WTC11 (cell line): ENCODE measurements at regions of chr16 and their contacts with region 1.

Region 1: DNA sequence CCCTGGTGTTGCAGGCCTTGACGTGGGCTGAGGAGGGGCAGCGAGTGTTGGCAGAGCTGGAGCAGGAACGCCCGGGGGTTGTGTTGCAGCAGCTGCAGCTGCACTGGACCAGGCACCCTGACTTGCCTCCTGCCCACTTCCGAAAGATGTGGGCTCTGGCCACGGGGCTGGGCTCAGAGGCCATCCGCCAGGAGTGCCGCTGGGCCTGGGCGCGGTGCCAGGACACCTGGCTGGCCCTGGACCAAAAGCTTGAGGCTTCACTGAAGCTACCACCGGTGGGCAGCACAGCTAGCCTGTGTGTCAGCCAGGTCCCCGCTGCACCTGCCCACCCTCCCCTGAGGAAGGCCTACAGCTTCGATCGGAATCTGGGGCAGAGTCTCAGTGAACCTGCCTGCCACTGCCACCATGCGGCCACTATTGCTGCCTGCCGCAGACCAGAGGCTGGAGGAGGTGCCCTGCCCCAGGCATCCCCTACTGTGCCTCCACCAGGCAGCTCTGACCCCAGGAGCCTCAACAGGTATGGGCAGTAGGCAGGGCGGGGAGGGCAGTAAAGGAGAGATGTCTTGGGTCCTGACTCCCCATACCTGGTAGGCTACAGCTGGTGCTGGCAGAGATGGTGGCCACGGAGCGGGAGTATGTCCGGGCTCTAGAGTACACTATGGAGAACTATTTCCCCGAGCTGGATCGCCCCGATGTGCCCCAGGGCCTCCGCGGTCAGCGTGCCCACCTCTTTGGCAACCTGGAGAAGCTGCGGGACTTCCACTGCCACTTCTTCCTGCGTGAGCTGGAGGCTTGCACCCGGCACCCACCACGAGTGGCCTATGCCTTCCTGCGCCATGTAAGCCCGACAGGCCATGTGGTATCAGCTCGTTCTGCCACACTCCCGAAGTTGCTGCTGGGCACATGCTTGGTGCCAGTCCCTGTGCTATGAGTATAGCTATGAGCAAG is 5.6 kb downstream of the PLEKHG4 start:
- DNase-seq: peak; percentile 84
- ATAC-seq: peak; percentile 94
- H3K4me3 Mint-ChIP-seq: no peak overlapping the region
- H3K27ac Mint-ChIP-seq: no peak overlapping the region
- H3K4me1 Mint-ChIP-seq: no peaks in the 10 kb centered on the region
- H3K27me3 Mint-ChIP-seq: peaks cover 9% of the 10 kb centered on the region
- CTCF ChIP-seq: peak; percentile 58

Region 2: DNA sequence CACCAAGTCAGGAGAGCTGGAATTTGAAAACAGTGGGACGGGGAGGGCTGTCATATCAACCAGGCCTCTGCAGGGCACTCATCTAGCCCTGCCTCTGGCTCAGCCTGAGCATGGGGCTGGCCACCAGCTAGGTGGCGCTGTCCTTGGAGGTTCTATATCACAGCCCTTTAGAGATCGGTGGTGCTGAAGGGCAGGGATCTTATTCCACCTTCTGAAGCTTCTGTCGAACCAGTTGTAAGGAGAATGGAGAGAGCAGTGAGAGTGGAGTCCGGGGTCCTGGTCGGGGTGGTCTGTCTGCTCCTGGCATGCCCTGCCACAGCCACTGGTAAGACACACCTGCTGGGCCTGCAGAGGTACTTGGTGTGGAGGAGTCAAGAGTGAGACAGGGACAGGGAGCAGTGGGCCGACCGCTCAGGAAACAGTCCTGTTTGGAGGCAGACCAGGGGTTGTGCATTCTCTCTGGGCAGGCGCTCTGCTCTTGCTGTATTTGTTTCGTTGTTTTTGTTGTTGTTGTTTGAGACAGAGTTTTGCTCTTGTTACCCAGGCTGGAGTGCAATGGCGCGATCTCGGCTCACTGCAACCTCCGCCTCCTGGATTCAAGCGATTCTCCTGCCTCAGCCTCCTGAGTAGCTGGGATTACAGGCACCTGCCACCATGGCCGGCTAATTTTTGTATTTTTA is 323.8 kb before region 1 on chr16 and contains the start of gene CES3:
- CTCF ChIA-PET with region 1: interaction called, 10 read pairs
- POLR2A ChIA-PET with region 1: no interaction called
- DNase-seq: peak; percentile 91
- ATAC-seq: peak; percentile 100
- H3K4me3 Mint-ChIP-seq: peak within 1 kb of the TSS; percentile 66
- H3K27ac Mint-ChIP-seq: peak within 1 kb of the TSS; percentile 56
- H3K4me1 Mint-ChIP-seq: peaks cover 9% of the 10 kb centered on the region
- H3K27me3 Mint-ChIP-seq: peaks cover 8% of the 10 kb centered on the region; the same call in 1 of the 2 replicates
- CTCF ChIP-seq: peak; percentile 72
- total RNA-seq, gene CES3: 3.3 to 6.0 TPM (median 5.7 TPM) in 3 replicates

Region 3: GRCh38 chr16:67236563-67237395 is 48.2 kb before region 1 on chr16:
- CTCF ChIA-PET with region 1: interaction called, 12 read pairs
- POLR2A ChIA-PET with region 1: no interaction called
- DNase-seq: peak; percentile 96
- ATAC-seq: peak; percentile 93
- H3K4me3 Mint-ChIP-seq: peak overlapping the region; percentile 43; the same call in 1 of the 2 replicates
- H3K27ac Mint-ChIP-seq: peak overlapping the region; percentile 80
- H3K4me1 Mint-ChIP-seq: peaks cover 17% of the 10 kb centered on the region
- H3K27me3 Mint-ChIP-seq: no peaks in the 10 kb centered on the region
- CTCF ChIP-seq: no peak

Region 4: DNA sequence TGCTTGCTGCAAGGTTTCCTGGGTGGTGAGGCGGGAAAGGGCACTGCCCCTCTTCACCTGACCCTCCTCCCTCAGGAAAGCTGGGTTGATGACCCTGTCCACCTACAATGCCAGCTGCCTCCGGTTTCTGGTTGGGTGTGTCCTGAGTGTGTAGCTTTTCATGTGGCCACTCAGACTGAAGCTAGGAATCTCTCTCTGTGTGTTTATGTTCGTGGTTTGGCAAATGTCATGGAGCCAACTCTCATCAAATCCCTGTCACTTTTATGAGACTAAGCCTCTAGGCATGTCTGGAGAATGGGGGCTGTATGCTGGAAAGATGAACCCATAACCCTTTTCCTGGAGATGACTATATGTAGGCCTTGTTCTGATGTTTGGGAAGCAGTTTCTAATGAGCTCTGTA is 11.4 kb after region 1 on chr16:
- CTCF ChIA-PET with region 1: interaction called, 51 read pairs
- POLR2A ChIA-PET with region 1: no interaction called
- DNase-seq: no peak
- ATAC-seq: no peak
- H3K4me3 Mint-ChIP-seq: no peak overlapping the region
- H3K27ac Mint-ChIP-seq: no peak overlapping the region
- H3K4me1 Mint-ChIP-seq: no peaks in the 10 kb centered on the region
- H3K27me3 Mint-ChIP-seq: peaks cover 42% of the 10 kb centered on the region
- CTCF ChIP-seq: no peak

Region 5: DNA sequence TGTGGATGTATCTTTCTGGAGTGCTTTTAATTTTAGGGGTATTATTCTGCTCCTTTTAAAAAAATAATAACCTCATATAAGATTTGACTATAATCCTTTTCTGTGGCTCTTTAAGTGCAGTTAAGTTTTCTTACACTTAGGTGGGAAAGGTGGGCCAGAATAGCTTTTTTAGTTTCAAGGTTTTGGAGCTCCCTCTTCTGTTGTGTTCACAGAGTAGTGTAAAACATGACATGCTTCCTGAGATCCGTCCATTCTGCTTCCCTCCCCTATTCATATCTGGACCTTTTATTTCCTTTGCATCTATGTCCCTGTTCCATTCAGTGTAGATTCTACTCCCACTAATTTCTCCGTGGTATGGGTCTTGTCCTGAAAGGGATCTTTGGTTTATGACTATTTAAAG is 54.5 kb after region 1 on chr16:
- CTCF ChIA-PET with region 1: interaction called, 18 read pairs
- POLR2A ChIA-PET with region 1: no interaction called
- DNase-seq: no peak
- ATAC-seq: no peak
- H3K4me3 Mint-ChIP-seq: no peak overlapping the region
- H3K27ac Mint-ChIP-seq: no peak overlapping the region
- H3K4me1 Mint-ChIP-seq: no peaks in the 10 kb centered on the region
- H3K27me3 Mint-ChIP-seq: peaks cover 15% of the 10 kb centered on the region
- CTCF ChIP-seq: no peak

Region 6: DNA sequence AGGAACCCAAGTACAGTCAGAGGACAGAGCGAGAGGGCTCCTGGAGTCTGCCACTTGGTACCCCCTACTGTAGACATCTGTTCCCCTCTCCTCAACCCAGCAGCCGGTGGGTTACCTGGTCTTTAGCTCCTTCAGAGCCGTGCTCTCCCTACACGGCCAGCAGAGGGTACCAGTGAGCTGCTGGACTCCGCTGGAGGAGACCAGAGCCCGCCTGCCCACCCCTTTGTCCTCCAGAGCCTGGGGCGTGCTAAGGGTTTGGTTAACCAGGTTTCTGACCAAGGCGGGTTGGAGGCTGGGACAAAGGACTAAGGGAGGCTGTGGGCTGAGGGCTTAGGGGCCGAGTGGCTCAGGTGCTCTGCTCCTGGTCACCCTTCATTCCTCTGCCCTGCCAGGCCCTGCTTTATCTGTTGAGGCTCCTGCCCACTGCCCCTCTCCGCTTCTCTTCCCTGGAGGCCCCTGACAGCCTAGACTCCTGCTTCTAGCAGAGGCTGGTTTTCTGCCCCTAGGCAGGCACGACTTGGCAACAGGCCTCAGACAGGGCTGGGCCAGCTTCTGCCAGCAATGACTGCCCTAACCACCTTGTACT is 143.3 kb after region 1 on chr16:
- CTCF ChIA-PET with region 1: interaction called, 14 read pairs
- POLR2A ChIA-PET with region 1: interaction called, 3 read pairs
- DNase-seq: peak; percentile 91
- ATAC-seq: peak; percentile 67
- H3K4me3 Mint-ChIP-seq: no peak overlapping the region
- H3K27ac Mint-ChIP-seq: no peak overlapping the region
- H3K4me1 Mint-ChIP-seq: peaks cover 77% of the 10 kb centered on the region
- H3K27me3 Mint-ChIP-seq: peaks cover 12% of the 10 kb centered on the region
- CTCF ChIP-seq: peak; percentile 80

Region 7: GRCh38 chr16:67470359-67470758 is 185.4 kb after region 1 on chr16:
- CTCF ChIA-PET with region 1: interaction called, 13 read pairs
- POLR2A ChIA-PET with region 1: no interaction called
- DNase-seq: no peak
- ATAC-seq: no peak
- H3K4me3 Mint-ChIP-seq: no peak overlapping the region
- H3K27ac Mint-ChIP-seq: no peak overlapping the region
- H3K4me1 Mint-ChIP-seq: peaks cover 3% of the 10 kb centered on the region
- H3K27me3 Mint-ChIP-seq: no peaks in the 10 kb centered on the region; the same call in 1 of the 2 replicates
- CTCF ChIP-seq: no peak